ENCODE measurements at regions of chr10 and their contacts with region 1.

Region 1: GRCh38 chr10:99430451-99431189 is at the start of gene GOT1:
- DNase-seq: peak; percentile 97
- H3K4me3 ChIP-seq: peak within 1 kb of the TSS; percentile 69 to 92 (median 82)
- H3K27ac ChIP-seq: peak within 1 kb of the TSS; percentile 82 to 94 (median 92)
- H3K4me1 ChIP-seq: peaks cover 10 to 74% (median 33%) of the 10 kb centered on the region in 6 donors
- H3K27me3 ChIP-seq: no peaks in the 10 kb centered on the region
- CTCF ChIP-seq: peak in 2 of 11 experiments; percentile 5 to 23
- POLR2A ChIP-seq: no peak
- total RNA-seq, gene GOT1: 11.6 to 23.1 (median 16.6) TPM

Region 2: DNA sequence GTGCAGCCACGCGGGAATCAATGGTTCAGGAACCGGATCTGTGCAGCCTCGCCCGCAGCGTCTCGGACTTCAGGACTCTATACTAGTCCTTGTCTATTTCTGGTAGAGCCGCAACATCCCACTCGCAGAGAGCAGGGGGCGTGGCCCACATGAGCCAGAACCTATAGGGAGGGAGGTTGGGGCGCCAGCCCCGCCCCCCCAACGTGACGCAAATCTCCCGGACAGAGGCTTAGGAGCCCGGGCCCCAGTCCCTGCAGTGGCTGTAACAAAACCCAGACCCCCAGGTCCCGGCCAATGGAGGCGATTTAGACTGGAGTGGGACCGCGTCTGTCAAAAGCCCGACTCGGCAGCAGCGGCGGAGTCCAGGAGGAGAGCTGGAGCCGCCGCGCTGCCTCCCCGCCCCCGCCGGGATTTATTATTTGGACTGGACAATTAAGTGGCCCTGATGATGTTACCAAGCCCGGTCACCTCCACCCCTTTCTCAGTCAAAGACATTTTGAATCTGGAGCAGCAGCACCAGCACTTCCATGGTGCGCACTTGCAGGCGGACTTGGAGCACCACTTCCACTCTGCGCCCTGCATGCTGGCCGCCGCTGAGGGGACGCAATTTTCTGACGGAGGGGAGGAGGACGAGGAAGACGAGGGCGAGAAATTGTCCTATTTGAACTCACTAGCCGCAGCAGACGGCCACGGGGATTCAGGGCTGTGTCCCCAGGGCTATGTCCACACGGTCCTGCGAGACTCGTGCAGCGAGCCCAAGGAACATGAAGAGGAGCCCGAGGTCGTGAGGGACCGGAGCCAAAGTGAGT is 102.3 kb after region 1 on chr10 and contains the start of gene NKX2-3:
- intact Hi-C with region 1: loop called (anchors 10 kb)
- DNase-seq: peak; percentile 91
- H3K4me3 ChIP-seq: peak within 1 kb of the TSS; percentile 43 to 77 (median 58)
- H3K27ac ChIP-seq: peak within 1 kb of the TSS; percentile 77 to 95 (median 86)
- H3K4me1 ChIP-seq: peaks cover 13 to 100% (median 75%) of the 10 kb centered on the region in 6 donors
- H3K27me3 ChIP-seq: peaks cover 4 to 100% (median 92%) of the 10 kb centered on the region in 7 donors
- CTCF ChIP-seq: no peak
- POLR2A ChIP-seq: peak in 1 of 3 donors; percentile 90
- total RNA-seq, gene NKX2-3: 27.4 to 69.1 (median 38.7) TPM

Region 3: DNA sequence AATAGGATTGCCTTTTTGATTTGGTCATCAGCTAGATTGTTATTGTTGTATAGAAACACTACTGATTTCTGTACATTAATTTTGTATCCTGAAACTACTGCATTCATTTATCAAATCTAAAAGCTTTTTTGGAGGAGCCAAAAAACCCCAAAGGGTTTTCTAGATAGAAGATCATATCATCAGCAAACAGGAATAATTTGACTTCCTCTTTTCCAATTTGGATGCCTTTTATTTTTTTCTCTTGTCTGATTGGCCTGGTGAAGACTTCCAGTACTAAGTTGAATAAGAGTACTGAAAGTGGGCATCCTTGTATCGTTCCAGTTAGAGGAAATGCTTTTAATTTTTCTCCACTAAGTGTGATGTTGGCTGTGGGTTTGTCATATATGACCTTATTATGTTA is 218.1 kb after region 1 on chr10:
- intact Hi-C with region 1: no loop called
- DNase-seq: no peak
- H3K4me3 ChIP-seq: no peak overlapping the region
- H3K27ac ChIP-seq: no peak overlapping the region
- H3K4me1 ChIP-seq: no peaks in the 10 kb centered on the region
- H3K27me3 ChIP-seq: peaks cover 0 to 10% (median 0%) of the 10 kb centered on the region in 7 donors
- CTCF ChIP-seq: no peak
- POLR2A ChIP-seq: no peak

Measured in spleen (tissue), 13 donors.